Tibial artery (tissue), 4 donors: ENCODE measurements at regions of chr17 and their contacts with region 1.

Region 1: DNA sequence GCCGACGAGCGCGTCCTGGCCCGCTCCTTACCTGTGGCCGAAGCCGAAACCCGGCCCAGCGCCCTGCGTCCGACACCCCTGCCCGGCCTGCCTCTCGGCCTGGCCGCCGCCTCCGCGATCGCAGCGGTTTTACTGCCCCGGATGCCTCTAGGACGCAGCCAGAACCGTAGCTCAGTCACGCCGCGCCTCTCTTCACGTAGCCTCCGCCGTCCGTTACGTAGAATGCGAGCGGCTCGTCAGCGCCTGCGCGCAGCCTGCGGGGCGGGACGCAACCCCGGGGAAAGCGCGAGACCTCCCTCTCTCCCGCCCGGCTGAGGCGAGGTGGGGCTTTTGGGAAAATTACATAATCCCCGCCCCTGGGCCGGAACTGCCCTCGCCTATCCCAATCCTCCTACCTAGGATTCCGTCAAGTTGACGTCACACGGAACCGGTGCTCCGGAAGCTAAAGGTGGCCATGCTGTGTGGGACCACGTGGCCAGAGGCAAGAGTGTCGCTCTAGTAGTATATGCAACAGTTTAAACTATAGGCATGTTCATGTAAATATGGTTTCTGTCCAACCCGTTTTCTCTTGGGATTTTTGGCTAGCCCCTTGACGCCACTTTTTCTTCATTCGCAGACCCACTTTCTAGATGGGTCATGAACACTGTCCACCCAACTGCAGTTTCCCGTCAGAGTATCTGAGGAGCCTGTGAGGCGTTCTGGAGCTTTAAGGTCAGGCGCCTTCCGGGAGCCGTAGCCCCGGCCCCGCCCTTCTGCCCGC is at the start of gene CCDC47:
- DNase-seq: peak; percentile 99 to 100
- H3K4me3 ChIP-seq: peak within 1 kb of the TSS; percentile 95 to 96
- H3K27ac ChIP-seq: peak within 1 kb of the TSS; percentile 93 to 97
- H3K4me1 ChIP-seq: peaks cover 0 to 64% (median 32%) of the 10 kb centered on the region in 4 donors
- H3K27me3 ChIP-seq: no peaks in the 10 kb centered on the region
- CTCF ChIP-seq: no peak

Region 2: GRCh38 chr17:63834431-63835166 is 61.0 kb after region 1 on chr17:
- intact Hi-C with region 1: loop called (anchors 5 kb)
- DNase-seq: peak; percentile 40 to 70
- H3K4me3 ChIP-seq: no peak overlapping the region
- H3K27ac ChIP-seq: peak overlapping the region in 1 of 2 donors; percentile 99
- H3K4me1 ChIP-seq: peaks cover 5 to 46% (median 34%) of the 10 kb centered on the region in 4 donors
- H3K27me3 ChIP-seq: no peaks in the 10 kb centered on the region
- CTCF ChIP-seq: peak; percentile 40 to 51

Region 3: GRCh38 chr17:63859257-63859656 is 85.7 kb after region 1 on chr17:
- intact Hi-C with region 1: no loop called
- DNase-seq: no peak
- H3K4me3 ChIP-seq: no peak overlapping the region
- H3K27ac ChIP-seq: no peak overlapping the region
- H3K4me1 ChIP-seq: no peaks in the 10 kb centered on the region
- H3K27me3 ChIP-seq: no peaks in the 10 kb centered on the region
- CTCF ChIP-seq: no peak